H1 (cell line): ENCODE measurements at regions of chr1 and their contacts with region 1.

Region 1: GRCh38 chr1:182789138-182790076 is at the start of gene NPL:
- DNase-seq: peak in 1 of 2 experiments; percentile 87
- H3K4me3 ChIP-seq: peak within 1 kb of the TSS; percentile 46 to 65 (median 56)
- H3K27ac ChIP-seq: no peak within 1 kb of the TSS
- H3K4me1 ChIP-seq: no peaks in the 10 kb centered on the region
- H3K27me3 ChIP-seq: peaks cover 15 to 36% (median 24%) of the 10 kb centered on the region in 4 experiments
- CTCF ChIP-seq: no peak
- EP300 ChIP-seq: peak in 1 of 2 experiments; percentile 20; a peak in 1 of 3 replicates
- POLR2A ChIP-seq: peak in 1 of 2 experiments; percentile 69; a peak in 2 of 3 replicates
- RAD21 ChIP-seq: 0 out of 4 replicates have a peak, but pooled peaks of 1 of the 2 experiments have one; percentile 2
- total RNA-seq, gene NPL: 2.3 and 4.4 TPM in 2 replicates

Region 2: DNA sequence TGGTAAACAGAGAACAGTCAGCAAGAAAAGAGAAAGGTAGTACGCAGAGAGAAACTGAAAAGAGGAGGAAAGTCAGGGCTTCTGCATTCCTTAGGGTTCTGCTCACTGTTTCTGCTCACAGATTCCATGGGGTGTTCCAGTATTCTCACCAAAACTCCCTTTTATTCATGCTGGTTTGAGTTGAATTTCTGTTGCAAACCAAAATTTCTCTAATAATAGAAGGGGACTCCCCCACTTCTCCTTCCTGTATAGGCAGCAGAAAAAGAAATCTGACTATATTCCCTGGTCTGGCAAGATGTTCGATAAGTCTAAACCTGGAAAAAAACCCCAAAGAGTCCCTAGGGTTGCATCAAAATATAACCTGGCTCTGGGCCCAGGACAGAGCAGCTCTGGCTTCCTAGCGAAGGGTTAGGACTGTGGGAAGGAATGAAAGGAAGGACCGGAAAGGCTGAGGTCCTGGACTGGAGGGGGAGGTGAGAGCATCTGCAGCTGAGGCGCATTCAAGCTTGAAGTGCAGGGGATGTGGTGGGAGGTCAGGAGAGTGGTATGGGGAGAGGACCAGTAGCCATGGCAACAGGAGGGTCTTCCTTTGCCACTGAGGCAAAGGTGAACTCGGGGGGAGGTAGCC is 166.4 kb before region 1 on chr1:
- CTCF ChIA-PET with region 1: interaction called, 1,131 read pairs
- POLR2A ChIA-PET with region 1: no interaction called
- DNase-seq: no peak
- H3K4me3 ChIP-seq: no peak overlapping the region
- H3K27ac ChIP-seq: no peak overlapping the region
- H3K4me1 ChIP-seq: peaks cover 2 to 10% (median 5%) of the 10 kb centered on the region in 4 experiments; a peak in 6 of 7 replicates
- H3K27me3 ChIP-seq: 0 out of 7 replicates have a peak, but pooled peaks cover 0 to under 1% (median 0%) of the 10 kb centered on the region in 4 experiments
- CTCF ChIP-seq: no peak
- EP300 ChIP-seq: no peak
- POLR2A ChIP-seq: no peak
- RAD21 ChIP-seq: no peak

Region 3: GRCh38 chr1:182740120-182740519 is 49.3 kb before region 1 on chr1:
- CTCF ChIA-PET with region 1: no interaction called
- POLR2A ChIA-PET with region 1: no interaction called
- DNase-seq: no peak
- H3K4me3 ChIP-seq: no peak overlapping the region
- H3K27ac ChIP-seq: no peak overlapping the region
- H3K4me1 ChIP-seq: no peaks in the 10 kb centered on the region
- H3K27me3 ChIP-seq: no peaks in the 10 kb centered on the region
- CTCF ChIP-seq: no peak
- EP300 ChIP-seq: no peak
- POLR2A ChIP-seq: no peak
- RAD21 ChIP-seq: no peak

Region 4: DNA sequence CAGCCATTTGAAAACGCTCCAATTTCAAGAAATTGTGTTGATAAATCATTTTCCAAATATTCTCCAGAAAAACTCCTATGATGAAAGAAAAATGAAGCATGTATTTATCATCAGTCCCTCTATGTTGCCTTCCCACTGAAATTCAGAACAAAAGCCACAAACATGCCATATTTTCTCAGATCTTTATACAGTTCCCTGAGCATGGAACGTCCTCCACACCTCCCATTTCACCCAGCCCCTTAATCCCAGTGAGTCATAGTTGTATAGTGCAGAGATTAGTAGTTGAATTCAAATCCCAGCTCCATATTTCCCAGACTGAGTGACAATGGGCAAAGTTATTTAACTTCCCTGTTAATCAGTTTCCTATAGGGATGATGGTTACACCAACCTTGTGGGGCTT is 20.4 kb before region 1 on chr1:
- CTCF ChIA-PET with region 1: interaction called, 77 read pairs
- POLR2A ChIA-PET with region 1: no interaction called
- DNase-seq: no peak
- H3K4me3 ChIP-seq: no peak overlapping the region
- H3K27ac ChIP-seq: no peak overlapping the region
- H3K4me1 ChIP-seq: peaks cover 0 to 8% (median 4%) of the 10 kb centered on the region in 4 experiments; a peak in 4 of 7 replicates
- H3K27me3 ChIP-seq: peaks cover 0 to 1% (median 0%) of the 10 kb centered on the region in 4 experiments; a peak in 1 of 7 replicates
- CTCF ChIP-seq: no peak
- EP300 ChIP-seq: no peak
- POLR2A ChIP-seq: no peak
- RAD21 ChIP-seq: no peak